AG04449 (cell line): ENCODE measurements at regions of chr14 and their contacts with region 1.

Region 1: DNA sequence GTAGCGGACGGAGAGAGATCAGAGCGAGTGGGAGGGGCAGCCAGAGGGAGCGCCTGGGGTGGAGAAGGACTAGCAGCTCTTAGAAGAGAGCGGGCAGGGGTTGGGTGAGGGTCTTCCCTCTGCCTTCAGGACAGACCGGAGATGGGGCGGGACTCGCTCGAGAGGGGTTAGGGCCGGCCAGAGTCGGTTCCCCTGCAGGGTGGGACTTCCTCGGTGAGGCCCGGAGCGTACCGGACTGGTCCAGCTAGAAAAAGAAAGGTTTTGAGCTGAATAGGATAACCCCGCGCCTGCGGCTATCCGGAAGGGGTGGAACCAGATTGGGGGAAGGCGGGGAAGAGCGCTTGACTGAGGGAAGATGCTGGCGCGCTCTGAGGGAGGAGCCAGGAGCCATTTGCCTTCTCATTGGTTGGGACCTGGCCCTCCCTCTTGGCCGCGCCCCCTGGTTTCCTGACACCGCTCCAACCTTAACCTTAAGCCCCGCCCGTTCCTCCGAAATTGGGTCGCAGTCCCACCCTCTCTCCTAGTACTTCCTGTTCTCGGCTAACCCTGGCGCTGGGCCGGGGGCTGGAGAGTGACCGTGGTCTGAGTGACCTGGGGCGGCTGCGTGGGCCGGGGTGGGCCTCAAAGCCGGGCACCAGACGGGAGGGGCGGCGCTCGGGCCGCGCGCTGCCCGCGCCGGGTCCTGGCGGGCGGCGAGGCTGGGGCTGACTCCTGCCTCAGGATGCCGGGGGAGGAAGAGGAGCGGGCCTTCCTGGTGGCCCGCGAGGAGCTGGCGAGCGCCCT is at the start of gene RNF31:
- DNase-seq: peak; percentile 88
- H3K4me3 ChIP-seq: peak within 1 kb of the TSS; percentile 92
- CTCF ChIP-seq: no peak

Region 2: DNA sequence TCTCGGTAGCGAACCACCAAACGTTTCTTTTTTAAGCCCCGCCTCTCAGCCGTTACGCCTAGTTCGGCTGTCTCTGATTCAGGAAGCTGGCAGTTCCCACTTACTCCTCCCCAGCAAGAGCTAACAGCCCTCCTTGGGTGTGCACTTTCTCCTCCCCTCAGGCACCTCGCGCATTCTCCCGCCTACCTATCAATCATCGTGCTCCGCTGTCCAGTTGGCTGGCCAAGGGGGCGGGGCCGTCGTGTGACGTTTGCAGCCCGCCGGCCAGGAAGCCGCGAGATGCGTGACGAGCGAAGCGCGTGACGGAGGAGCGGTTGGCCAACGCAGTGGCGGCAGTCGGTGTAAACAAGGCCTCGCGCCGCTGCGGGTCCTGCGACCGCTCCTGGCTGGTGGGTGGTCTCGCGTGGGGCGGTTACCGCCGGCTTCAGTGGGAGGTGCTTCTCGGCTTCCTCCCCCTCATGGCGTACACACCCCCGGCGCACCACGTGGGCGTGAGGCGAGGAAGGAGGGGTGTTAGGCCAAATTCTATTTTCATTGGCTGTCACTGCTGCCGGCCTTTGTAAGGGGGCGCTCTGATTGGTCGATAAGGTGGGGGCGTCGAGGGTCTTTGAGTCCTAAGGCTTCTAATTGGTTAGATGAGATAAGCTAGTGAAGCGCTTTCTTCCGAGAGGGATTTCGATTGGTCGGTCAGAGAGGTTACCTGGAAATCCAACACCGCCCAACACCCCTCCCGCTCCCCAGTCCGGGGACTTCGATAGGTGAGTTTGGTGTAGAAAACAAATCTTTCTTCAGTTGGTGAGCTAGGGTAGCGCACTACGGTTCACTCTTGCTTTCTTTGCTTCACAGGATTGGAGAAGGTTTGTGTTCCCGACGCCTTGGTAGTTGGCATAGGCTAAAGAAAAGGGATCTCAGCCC is 32.4 kb before region 1 on chr14 and contains the starts of genes DCAF11 and NRL:
- CTCF ChIA-PET with region 1: interaction called, 22 read pairs
- POLR2A ChIA-PET with region 1: interaction called, 14 read pairs
- DNase-seq: peak; percentile 99
- H3K4me3 ChIP-seq: peak within 1 kb of the TSS; percentile 96
- CTCF ChIP-seq: no peak

Region 3: DNA sequence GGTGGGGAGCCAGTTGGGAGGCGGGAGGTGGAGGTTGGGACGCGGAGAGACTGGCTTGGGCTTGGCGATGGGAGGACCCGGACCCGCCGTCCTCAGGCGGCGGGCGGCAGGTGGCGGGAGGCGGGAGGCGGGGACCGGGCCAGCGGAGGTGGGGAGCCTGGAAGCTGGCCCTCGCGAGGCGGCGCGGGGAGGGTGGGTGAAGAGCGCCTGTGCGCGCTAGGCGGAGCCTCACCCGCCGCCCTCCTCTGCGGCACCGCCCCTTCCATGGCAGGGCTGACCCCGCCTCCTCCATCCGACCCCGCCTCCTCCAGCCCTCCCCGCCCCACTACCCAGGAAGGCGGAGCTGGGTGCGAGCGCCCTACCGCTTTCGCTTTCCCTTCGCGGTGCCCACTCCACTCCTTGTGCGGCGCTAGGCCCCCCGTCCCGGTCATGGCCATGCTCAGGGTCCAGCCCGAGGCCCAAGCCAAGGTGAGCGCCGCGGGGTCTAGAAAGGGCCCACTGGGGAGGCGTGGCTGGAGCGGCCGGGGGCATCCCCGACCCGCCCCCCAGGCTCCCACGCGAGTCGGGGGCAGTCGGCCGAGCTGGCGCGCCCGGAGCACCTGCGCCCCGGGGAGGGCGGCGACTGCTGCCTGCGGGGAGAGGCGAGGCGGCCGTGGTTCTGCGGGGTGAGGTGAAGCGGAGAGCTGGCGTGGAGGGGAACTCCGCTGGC is 11.2 kb before region 1 on chr14 and contains the start of gene PSME1:
- CTCF ChIA-PET with region 1: interaction called, 11 read pairs
- POLR2A ChIA-PET with region 1: interaction called, 11 read pairs
- DNase-seq: no peak
- H3K4me3 ChIP-seq: peak within 1 kb of the TSS; percentile 73
- CTCF ChIP-seq: no peak

Region 4: DNA sequence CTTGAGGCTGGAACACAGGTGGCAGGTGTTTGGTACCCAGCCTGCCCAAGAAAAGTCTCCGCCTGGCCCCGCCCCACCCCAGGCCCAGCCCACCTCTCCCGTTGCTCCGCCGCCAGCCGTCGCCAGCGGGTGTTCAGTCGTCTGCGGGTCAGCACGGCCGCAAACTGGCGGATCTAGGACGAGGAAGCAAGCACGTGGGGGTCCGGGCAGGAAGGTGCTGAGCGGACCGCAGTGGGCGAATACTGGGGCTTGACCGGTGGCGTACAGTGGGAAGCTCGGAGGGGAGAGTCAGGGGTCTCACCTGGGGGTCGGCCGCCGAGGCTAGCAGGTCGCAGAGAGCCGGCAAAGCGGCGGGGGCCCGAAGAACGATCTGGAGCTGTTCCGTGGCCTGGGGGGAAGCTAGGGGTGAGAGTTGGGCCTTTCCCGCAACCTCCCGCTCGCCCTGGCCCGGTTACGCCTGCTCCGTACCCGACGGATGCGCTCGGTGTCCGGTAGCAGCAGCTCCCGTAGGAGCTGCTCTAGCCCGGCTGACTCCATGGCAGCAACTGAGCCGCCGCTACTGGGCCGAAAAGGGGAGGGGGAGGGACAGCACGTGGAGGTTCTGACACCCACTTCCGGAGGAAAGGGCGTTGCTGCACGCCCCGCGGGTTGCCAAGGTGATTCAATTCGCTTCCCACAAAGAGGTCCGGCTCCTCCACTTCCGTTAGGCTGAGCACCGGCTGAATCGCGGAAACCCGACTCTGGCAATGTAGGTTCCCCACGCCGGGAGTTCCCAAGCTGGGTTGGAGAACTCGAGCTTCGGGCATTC is 41.3 kb after region 1 on chr14 and contains the start of gene IPO4:
- CTCF ChIA-PET with region 1: no interaction called
- POLR2A ChIA-PET with region 1: interaction called, 10 read pairs
- DNase-seq: peak; percentile 90
- H3K4me3 ChIP-seq: peak within 1 kb of the TSS; percentile 84
- CTCF ChIP-seq: no peak

Region 5: DNA sequence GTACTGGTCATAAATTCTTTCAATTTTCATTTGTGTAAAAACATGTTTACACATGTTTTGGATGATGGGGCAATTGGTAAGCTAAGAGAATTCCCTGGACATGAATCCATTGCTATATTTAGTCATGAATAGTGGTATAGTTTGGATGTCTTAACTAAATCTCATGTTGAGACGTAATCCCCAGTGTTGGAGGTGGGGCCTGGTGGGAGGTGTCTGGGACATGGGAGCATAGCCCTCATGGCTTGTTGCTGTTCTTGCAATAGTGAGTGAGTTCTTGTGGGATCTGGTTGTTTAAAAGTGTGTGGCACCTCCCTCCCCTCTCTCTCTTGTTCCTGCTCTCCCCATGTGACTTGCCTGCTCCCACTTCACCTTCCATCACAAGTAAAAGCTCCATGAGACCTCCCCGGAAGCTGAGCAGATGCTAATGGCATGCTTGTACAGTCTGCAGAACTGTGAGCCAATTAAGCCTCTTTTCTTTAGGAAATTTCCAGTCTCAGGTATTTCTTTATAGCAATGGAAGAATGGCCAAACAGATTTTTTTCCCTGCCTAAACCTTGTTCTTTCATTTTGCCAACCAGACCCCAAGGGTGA is 395.3 kb after region 1 on chr14:
- CTCF ChIA-PET with region 1: no interaction called
- POLR2A ChIA-PET with region 1: no interaction called
- DNase-seq: no peak
- H3K4me3 ChIP-seq: no peak overlapping the region
- CTCF ChIP-seq: no peak